ENCODE measurements at regions of chr12 and their contacts with region 1.

Region 1: GRCh38 chr12:32302218-32303173 is 96.9 kb upstream of the FGD4 start:
- DNase-seq: no peak
- H3K4me3 ChIP-seq: no peak overlapping the region
- H3K4me3 Mint-ChIP-seq: no peak overlapping the region
- H3K27ac Mint-ChIP-seq: peak overlapping the region; percentile 29
- H3K4me1 ChIP-seq: 0 out of 2 replicates have a peak, but pooled peaks cover 11% of the 10 kb centered on the region
- H3K4me1 Mint-ChIP-seq: peaks cover 25% of the 10 kb centered on the region
- H3K27me3 ChIP-seq: no peaks in the 10 kb centered on the region
- H3K27me3 Mint-ChIP-seq: no peaks in the 10 kb centered on the region
- CTCF ChIP-seq: no peak

Region 2: DNA sequence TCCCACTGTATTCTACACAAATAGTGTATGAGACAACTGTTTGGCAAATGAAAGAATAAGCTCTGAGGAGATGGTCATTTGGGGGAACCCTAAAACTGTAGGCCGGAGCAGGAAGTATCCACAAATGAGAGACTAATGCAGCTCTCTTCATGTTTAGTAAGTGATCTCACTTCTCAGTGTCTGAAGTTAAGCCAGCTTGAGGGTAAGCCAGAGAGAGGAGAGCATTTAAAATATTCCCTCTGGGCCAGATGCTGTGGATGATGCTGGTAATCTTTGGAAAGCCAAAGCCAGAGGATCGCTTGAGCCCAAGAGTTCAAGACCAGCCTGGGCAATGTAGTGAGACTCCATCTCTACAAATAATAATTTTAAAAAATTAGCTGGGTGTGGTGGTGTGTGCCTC is 845.9 kb before region 1 on chr12:
- CTCF ChIA-PET with region 1: no interaction called
- POLR2A ChIA-PET with region 1: no interaction called
- intact Hi-C with region 1: no loop called
- DNase-seq: no peak
- H3K4me3 ChIP-seq: no peak overlapping the region
- H3K4me3 Mint-ChIP-seq: no peak overlapping the region
- H3K27ac Mint-ChIP-seq: no peak overlapping the region
- H3K4me1 ChIP-seq: no peaks in the 10 kb centered on the region
- H3K4me1 Mint-ChIP-seq: no peaks in the 10 kb centered on the region
- H3K27me3 ChIP-seq: no peaks in the 10 kb centered on the region
- H3K27me3 Mint-ChIP-seq: no peaks in the 10 kb centered on the region
- CTCF ChIP-seq: no peak

Region 3: GRCh38 chr12:32062881-32063280 is 239.6 kb before region 1 on chr12:
- CTCF ChIA-PET with region 1: interaction called, 3 read pairs
- POLR2A ChIA-PET with region 1: no interaction called
- intact Hi-C with region 1: loop called (anchors 1 kb)
- DNase-seq: no peak
- H3K4me3 ChIP-seq: no peak overlapping the region
- H3K4me3 Mint-ChIP-seq: no peak overlapping the region
- H3K27ac Mint-ChIP-seq: no peak overlapping the region
- H3K4me1 ChIP-seq: no peaks in the 10 kb centered on the region
- H3K4me1 Mint-ChIP-seq: no peaks in the 10 kb centered on the region
- H3K27me3 ChIP-seq: no peaks in the 10 kb centered on the region
- H3K27me3 Mint-ChIP-seq: no peaks in the 10 kb centered on the region
- CTCF ChIP-seq: no peak

Region 4: DNA sequence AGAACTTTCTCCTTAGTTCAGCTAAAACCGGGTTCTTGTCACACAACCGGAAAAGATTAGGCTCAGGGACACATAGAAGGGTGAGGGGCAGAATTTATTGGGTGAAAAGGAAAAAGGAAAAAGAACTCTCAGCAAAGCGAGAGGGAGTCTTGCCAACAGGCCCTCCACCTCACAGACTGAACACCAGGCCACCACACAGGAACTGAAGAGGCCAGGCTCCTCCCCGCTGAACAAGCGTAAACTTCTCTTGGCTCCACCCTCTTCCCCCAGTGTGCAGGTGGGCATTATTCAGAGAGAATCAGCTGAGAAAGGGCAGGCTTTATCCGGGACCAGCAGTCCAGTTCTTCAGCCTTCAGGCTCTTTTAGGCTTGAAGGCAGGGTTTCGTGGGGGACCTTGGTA is 28.8 kb before region 1 on chr12:
- CTCF ChIA-PET with region 1: no interaction called
- POLR2A ChIA-PET with region 1: no interaction called
- intact Hi-C with region 1: loop called (anchors 2 kb)
- DNase-seq: peak in 1 of 2 experiments; percentile 35
- H3K4me3 ChIP-seq: no peak overlapping the region
- H3K4me3 Mint-ChIP-seq: peak overlapping the region; percentile 22
- H3K27ac Mint-ChIP-seq: peak overlapping the region; percentile 61
- H3K4me1 ChIP-seq: peaks cover 47% of the 10 kb centered on the region
- H3K4me1 Mint-ChIP-seq: peaks cover 44% of the 10 kb centered on the region
- H3K27me3 ChIP-seq: no peaks in the 10 kb centered on the region
- H3K27me3 Mint-ChIP-seq: no peaks in the 10 kb centered on the region
- CTCF ChIP-seq: no peak

Region 5: GRCh38 chr12:32455607-32456071 is 153.1 kb after region 1 on chr12:
- CTCF ChIA-PET with region 1: no interaction called
- POLR2A ChIA-PET with region 1: no interaction called
- intact Hi-C with region 1: no loop called
- DNase-seq: peak in 1 of 2 experiments; percentile 69
- H3K4me3 ChIP-seq: no peak overlapping the region
- H3K4me3 Mint-ChIP-seq: no peak overlapping the region
- H3K27ac Mint-ChIP-seq: peak overlapping the region; percentile 74
- H3K4me1 ChIP-seq: peaks cover 48% of the 10 kb centered on the region
- H3K4me1 Mint-ChIP-seq: peaks cover 54% of the 10 kb centered on the region
- H3K27me3 ChIP-seq: no peaks in the 10 kb centered on the region
- H3K27me3 Mint-ChIP-seq: no peaks in the 10 kb centered on the region
- CTCF ChIP-seq: peak; percentile 68 to 82